ENCODE measurements at regions of chr3 and their contacts with region 1.

Region 1: GRCh38 chr3:114213627-114214541 is 23.5 kb downstream of the ZNF80 start:
- DNase-seq: peak; percentile 74 to 92 (median 79)
- H3K4me3 ChIP-seq: peak overlapping the region; percentile 26 to 58
- H3K4me3 Mint-ChIP-seq: no peak overlapping the region
- H3K27ac ChIP-seq: peak overlapping the region; percentile 86
- H3K27ac Mint-ChIP-seq: no peak overlapping the region
- H3K4me1 ChIP-seq: peaks cover 71% of the 10 kb centered on the region
- H3K4me1 Mint-ChIP-seq: peaks cover 0 to 20% (median 7%) of the 10 kb centered on the region in 4 donors
- H3K27me3 ChIP-seq: no peaks in the 10 kb centered on the region
- H3K27me3 Mint-ChIP-seq: no peaks in the 10 kb centered on the region

Region 2: GRCh38 chr3:114179575-114179974 is 34.3 kb before region 1 on chr3:
- CTCF ChIA-PET with region 1: interaction called, 3 read pairs
- POLR2A ChIA-PET with region 1: interaction called, 4 read pairs
- intact Hi-C with region 1: loop called (anchors 5 kb)
- DNase-seq: peak in 4 of 5 donors; percentile 3 to 31 (median 14)
- H3K4me3 ChIP-seq: no peak overlapping the region
- H3K4me3 Mint-ChIP-seq: peak overlapping the region in 1 of 8 donors; percentile 37
- H3K27ac ChIP-seq: no peak overlapping the region
- H3K27ac Mint-ChIP-seq: peak overlapping the region in 1 of 7 donors; percentile 30
- H3K4me1 ChIP-seq: peaks cover 5% of the 10 kb centered on the region
- H3K4me1 Mint-ChIP-seq: peaks cover 4 to 8% (median 5%) of the 10 kb centered on the region in 4 donors
- H3K27me3 ChIP-seq: no peaks in the 10 kb centered on the region
- H3K27me3 Mint-ChIP-seq: no peaks in the 10 kb centered on the region

Region 3: DNA sequence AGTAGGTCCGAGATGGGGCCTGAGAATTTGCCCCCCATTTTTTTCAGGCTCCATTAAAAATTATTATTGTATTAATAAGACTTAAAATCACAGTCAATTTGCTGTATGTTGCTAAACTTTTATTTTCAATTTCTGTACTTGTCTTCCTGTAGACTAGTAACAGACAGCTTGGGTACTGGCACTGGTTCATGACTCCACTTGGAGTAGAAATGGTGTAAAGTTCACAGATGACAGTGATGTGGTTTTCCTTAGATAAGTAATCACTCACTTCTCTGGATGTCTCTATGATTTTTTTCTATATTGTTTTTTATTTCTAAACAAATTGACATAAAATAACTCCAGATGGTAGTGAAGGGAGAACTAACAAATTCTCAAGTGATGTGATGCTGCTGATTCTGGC is 39.1 kb after region 1 on chr3:
- CTCF ChIA-PET with region 1: interaction called, 6 read pairs
- POLR2A ChIA-PET with region 1: interaction called, 7 read pairs
- intact Hi-C with region 1: loop called (anchors 5 kb)
- DNase-seq: no peak
- H3K4me3 ChIP-seq: no peak overlapping the region
- H3K4me3 Mint-ChIP-seq: no peak overlapping the region
- H3K27ac ChIP-seq: no peak overlapping the region
- H3K27ac Mint-ChIP-seq: peak overlapping the region in 5 of 7 donors; percentile 31 to 71 (median 43)
- H3K4me1 ChIP-seq: peaks cover 4% of the 10 kb centered on the region
- H3K4me1 Mint-ChIP-seq: peaks cover 6 to 16% (median 11%) of the 10 kb centered on the region in 4 donors
- H3K27me3 ChIP-seq: no peaks in the 10 kb centered on the region
- H3K27me3 Mint-ChIP-seq: no peaks in the 10 kb centered on the region

Region 4: DNA sequence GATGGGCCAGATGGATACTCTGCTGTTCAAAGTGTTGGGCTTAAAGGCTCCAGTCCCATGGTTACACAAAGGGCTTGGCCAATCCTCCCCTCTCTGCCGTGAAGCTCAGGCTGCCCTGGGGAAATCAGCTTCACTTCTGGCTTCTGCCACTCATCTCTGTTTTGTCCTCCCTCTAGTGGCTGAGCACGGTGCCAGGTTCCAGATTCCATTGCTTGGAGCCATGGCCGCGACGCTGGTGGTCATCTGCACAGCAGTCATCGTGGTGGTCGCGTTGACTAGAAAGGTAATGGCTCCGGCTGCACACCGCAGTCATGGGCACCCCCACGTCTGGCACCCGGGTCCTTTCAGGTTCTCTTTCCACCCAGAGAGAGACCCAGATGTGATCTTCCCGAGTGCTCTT is 85.5 kb after region 1 on chr3:
- CTCF ChIA-PET with region 1: interaction called, 138 read pairs
- POLR2A ChIA-PET with region 1: interaction called, 309 read pairs
- intact Hi-C with region 1: no loop called
- DNase-seq: peak in 2 of 5 donors; percentile 28
- H3K4me3 ChIP-seq: peak overlapping the region in 1 of 2 donors; percentile 9
- H3K4me3 Mint-ChIP-seq: peak overlapping the region; percentile 59 to 77 (median 68)
- H3K27ac ChIP-seq: peak overlapping the region; percentile 29
- H3K27ac Mint-ChIP-seq: peak overlapping the region in 6 of 7 donors; percentile 32 to 90 (median 76)
- H3K4me1 ChIP-seq: peaks cover 38% of the 10 kb centered on the region
- H3K4me1 Mint-ChIP-seq: peaks cover 31 to 56% (median 42%) of the 10 kb centered on the region in 4 donors
- H3K27me3 ChIP-seq: no peaks in the 10 kb centered on the region
- H3K27me3 Mint-ChIP-seq: no peaks in the 10 kb centered on the region

Region 5: DNA sequence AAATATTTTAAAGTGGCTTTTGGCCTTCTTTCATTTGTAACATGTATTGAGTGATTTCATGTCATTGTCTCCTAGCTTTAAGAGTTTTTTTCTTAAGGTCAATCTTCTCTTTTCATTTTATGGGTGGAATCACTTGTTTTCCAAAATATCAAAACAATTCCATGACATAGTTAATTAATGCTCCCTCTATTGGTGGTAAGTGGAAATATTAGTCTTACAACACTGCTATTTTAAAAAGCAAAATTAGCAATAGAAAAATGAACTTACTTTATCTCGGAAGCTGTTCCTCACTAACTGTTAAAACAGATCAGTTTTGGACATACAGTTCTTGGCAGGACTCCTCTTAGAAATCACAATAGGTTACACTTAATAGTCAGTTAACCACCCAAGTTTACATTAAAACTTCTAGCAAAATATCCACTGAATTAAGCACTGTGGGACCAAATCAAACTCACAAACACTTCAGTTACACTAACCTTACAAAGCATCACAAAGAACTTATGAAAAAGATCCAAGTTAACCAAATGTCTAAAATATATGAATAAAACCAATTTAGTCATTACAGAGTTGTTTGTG is 122.3 kb after region 1 on chr3:
- CTCF ChIA-PET with region 1: interaction called, 24 read pairs
- POLR2A ChIA-PET with region 1: interaction called, 11 read pairs
- intact Hi-C with region 1: loop called (anchors 1 kb)
- DNase-seq: no peak
- H3K4me3 ChIP-seq: no peak overlapping the region
- H3K4me3 Mint-ChIP-seq: no peak overlapping the region
- H3K27ac ChIP-seq: no peak overlapping the region
- H3K27ac Mint-ChIP-seq: peak overlapping the region in 5 of 7 donors; percentile 17 to 82 (median 41)
- H3K4me1 ChIP-seq: peaks cover 61% of the 10 kb centered on the region
- H3K4me1 Mint-ChIP-seq: peaks cover 37 to 79% (median 57%) of the 10 kb centered on the region in 4 donors
- H3K27me3 ChIP-seq: no peaks in the 10 kb centered on the region
- H3K27me3 Mint-ChIP-seq: no peaks in the 10 kb centered on the region

Region 6: DNA sequence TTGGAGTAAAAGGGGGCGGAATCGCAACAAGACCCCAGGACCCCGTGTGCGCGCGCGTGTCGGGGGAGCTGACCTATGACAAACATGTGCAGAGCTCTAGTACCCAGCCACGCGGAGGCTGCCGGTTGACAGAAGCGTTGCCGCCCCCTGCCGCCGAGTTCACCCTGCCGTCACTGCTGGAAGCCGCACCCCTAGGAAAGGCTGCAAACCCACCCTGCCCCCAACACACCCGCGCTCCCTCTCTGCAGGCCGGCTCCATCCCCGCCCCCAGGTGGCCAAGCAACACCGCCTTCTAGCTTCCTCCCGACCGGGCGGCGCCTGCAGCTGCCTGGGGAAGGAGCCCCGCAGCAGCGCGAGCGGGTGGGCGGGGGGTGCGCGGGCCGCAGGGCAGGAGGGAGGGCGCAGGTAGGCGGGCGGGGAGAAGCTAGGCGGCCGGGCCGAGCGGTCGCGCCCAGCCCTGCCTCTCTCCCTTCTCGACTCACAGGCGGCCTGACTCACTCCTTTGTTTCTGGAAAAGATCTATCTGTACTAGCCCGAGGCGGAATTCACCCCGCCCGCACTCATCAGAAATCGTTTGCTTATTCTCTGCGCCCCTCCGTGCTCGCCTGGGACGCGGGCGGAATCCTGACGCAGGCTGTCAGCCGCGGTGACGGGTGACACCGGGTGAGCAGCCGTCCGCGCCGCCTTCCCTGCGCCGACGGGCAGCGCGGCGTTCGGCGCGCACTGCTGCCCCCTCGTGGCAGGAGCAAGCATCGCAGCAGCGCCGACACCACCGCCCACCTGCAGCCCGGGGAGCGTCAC is 1570.3 kb after region 1 on chr3:
- CTCF ChIA-PET with region 1: no interaction called
- POLR2A ChIA-PET with region 1: no interaction called
- intact Hi-C with region 1: loop called (anchors 10 kb)
- DNase-seq: peak; percentile 91 to 96 (median 93)
- H3K4me3 ChIP-seq: peak overlapping the region in 1 of 2 donors; percentile 81
- H3K4me3 Mint-ChIP-seq: peak overlapping the region; percentile 78 to 96 (median 93)
- H3K27ac ChIP-seq: peak overlapping the region; percentile 90
- H3K27ac Mint-ChIP-seq: peak overlapping the region; percentile 76 to 99 (median 98)
- H3K4me1 ChIP-seq: peaks cover 13% of the 10 kb centered on the region
- H3K4me1 Mint-ChIP-seq: peaks cover 10 to 19% (median 10%) of the 10 kb centered on the region in 4 donors
- H3K27me3 ChIP-seq: no peaks in the 10 kb centered on the region
- H3K27me3 Mint-ChIP-seq: no peaks in the 10 kb centered on the region

Measured in CD4-positive, alpha-beta memory T cell (primary cell).